ENCODE measurements at regions of chr4 and their contacts with region 1.

Region 1: DNA sequence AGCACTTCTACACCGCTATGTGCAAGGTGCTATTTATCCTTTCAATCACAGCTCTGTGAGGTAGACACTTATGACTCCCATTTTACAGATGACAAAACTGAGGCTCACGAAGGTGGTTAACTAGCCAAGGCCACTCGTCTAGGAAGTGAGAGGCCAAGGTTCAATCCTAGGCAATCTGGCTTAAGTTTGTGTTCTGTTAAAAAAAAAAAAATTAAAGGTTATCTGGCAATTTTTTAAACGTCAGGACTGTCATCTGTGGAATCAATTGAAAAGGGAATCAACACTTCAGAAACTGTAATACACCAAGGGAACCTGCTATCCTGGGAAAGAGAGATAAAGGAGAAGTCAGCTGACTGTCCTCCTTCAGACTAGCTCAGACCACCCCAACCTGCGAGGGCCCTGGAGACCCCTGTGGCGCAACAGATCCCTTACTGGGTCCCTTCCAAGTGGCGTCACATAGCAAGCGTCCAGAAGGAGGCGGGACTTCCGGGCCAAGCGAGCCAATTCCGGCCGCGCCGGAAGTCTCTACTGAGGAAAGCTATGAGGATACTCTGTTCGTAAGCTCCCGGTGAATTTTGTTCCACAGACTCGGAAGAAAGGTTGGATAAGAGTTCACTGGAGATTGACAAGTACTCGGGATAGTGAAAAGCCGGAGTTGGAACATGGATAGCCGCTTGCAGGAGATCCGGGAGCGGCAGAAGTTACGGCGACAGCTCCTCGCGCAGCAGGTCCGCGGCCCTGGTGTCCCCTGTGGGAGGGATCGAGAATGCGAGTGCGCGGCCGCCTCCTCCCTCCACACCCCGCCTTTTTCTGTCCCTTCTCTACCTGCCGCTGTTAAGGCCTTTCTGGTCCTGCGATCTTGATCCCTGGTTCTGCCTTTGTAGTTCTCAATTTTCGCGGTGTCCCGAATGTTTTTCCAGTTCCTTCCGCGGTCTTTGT is at the start of gene METTL14:
- DNase-seq: peak; percentile 66 to 89 (median 80)
- ATAC-seq: peak; percentile 95 to 97 (median 96)
- H3K4me3 ChIP-seq: peak within 1 kb of the TSS; percentile 92 to 98
- H3K4me3 Mint-ChIP-seq: peak within 1 kb of the TSS; percentile 96 to 98 (median 98)
- H3K27ac ChIP-seq: peak within 1 kb of the TSS; percentile 87
- H3K27ac Mint-ChIP-seq: peak within 1 kb of the TSS; percentile 93 to 98
- H3K4me1 ChIP-seq: peaks cover 3 to 19% of the 10 kb centered on the region in 2 experiments
- H3K4me1 Mint-ChIP-seq: peaks cover 32 to 37% (median 35%) of the 10 kb centered on the region in 3 donors
- H3K27me3 ChIP-seq: no peaks in the 10 kb centered on the region
- H3K27me3 Mint-ChIP-seq: peaks cover 0 to 1% of the 10 kb centered on the region in 2 donors
- total RNA-seq, gene METTL14: 39.4 to 53.8 (median 48.9) TPM

Region 2: GRCh38 chr4:118284169-118284568 is 401.0 kb before region 1 on chr4:
- CTCF ChIA-PET with region 1: interaction called in 1 of 2 experiments, 3 read pairs
- POLR2A ChIA-PET with region 1: interaction called, 5 to 14 read pairs
- DNase-seq: no peak
- ATAC-seq: no peak
- H3K4me3 ChIP-seq: no peak overlapping the region
- H3K4me3 Mint-ChIP-seq: no peak overlapping the region
- H3K27ac ChIP-seq: no peak overlapping the region
- H3K27ac Mint-ChIP-seq: no peak overlapping the region
- H3K4me1 ChIP-seq: peaks cover 6 to 23% of the 10 kb centered on the region in 2 experiments
- H3K4me1 Mint-ChIP-seq: peaks cover 41 to 45% (median 45%) of the 10 kb centered on the region in 3 donors
- H3K27me3 ChIP-seq: no peaks in the 10 kb centered on the region
- H3K27me3 Mint-ChIP-seq: no peaks in the 10 kb centered on the region

Region 3: GRCh38 chr4:118322831-118323502 is 362.2 kb before region 1 on chr4:
- CTCF ChIA-PET with region 1: no interaction called
- POLR2A ChIA-PET with region 1: no interaction called
- DNase-seq: no peak
- ATAC-seq: no peak
- H3K4me3 ChIP-seq: no peak overlapping the region
- H3K4me3 Mint-ChIP-seq: no peak overlapping the region
- H3K27ac ChIP-seq: no peak overlapping the region
- H3K27ac Mint-ChIP-seq: no peak overlapping the region
- H3K4me1 ChIP-seq: no peaks in the 10 kb centered on the region
- H3K4me1 Mint-ChIP-seq: no peaks in the 10 kb centered on the region
- H3K27me3 ChIP-seq: peaks cover 0 to 8% of the 10 kb centered on the region in 2 experiments
- H3K27me3 Mint-ChIP-seq: peaks cover 17 to 22% of the 10 kb centered on the region in 2 donors

Region 4: DNA sequence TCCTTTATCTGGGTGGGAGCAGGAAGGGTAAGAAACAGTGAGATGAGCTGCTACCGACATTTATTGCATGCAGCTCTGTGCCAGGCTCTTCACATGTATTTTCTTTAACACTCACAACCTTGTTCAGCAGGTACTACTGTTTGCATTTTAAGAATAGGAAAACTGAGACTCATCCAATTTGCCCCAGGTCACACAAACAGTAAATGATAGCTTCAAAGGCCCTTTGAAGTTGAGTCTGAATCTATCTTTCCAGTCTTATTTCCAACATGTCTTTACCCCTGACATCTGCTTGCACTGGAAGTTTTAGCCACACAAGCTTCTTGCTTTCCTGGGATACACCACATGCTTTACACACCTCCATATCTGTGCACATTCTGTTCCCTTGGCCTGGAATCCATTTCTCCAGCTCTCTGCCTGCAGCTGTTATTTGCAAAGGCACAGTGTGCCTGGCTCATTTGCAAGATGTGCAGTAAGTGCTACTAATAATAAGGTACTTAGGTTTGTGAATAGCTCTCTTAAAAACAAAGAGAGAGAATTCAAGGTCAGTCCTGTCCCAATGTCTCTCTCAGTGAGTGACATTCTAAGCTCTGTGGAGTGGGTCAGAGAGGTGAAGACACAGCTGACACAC is 61.3 kb after region 1 on chr4:
- CTCF ChIA-PET with region 1: no interaction called
- POLR2A ChIA-PET with region 1: interaction called in 1 of 2 experiments, 11 read pairs
- DNase-seq: no peak
- ATAC-seq: no peak
- H3K4me3 ChIP-seq: no peak overlapping the region
- H3K4me3 Mint-ChIP-seq: no peak overlapping the region
- H3K27ac ChIP-seq: no peak overlapping the region
- H3K27ac Mint-ChIP-seq: no peak overlapping the region
- H3K4me1 ChIP-seq: no peaks in the 10 kb centered on the region
- H3K4me1 Mint-ChIP-seq: no peaks in the 10 kb centered on the region
- H3K27me3 ChIP-seq: no peaks in the 10 kb centered on the region
- H3K27me3 Mint-ChIP-seq: no peaks in the 10 kb centered on the region

Region 5: DNA sequence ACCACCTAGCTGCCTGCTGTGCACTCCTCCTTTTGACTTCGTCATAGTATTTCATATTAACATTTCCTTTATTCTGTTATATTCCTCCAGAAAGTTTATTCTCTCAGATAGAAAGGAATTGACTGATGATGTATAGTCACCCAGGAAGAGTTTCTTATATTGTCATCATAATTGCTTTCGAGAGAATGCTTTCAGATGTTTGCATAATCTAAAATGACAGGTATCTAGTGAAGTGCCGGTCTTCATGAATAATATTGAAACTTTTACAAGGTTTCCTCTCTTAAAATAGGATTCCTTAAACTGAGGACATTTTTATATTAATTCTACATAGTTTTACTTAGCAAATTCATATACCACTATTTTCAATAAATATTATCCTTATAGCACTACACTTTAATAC is 140.7 kb after region 1 on chr4:
- CTCF ChIA-PET with region 1: no interaction called
- POLR2A ChIA-PET with region 1: no interaction called
- DNase-seq: no peak
- ATAC-seq: no peak
- H3K4me3 ChIP-seq: no peak overlapping the region
- H3K4me3 Mint-ChIP-seq: no peak overlapping the region
- H3K27ac ChIP-seq: no peak overlapping the region
- H3K27ac Mint-ChIP-seq: no peak overlapping the region
- H3K4me1 ChIP-seq: peaks cover 0 to 2% of the 10 kb centered on the region in 2 experiments
- H3K4me1 Mint-ChIP-seq: peaks cover 29 to 45% (median 35%) of the 10 kb centered on the region in 3 donors
- H3K27me3 ChIP-seq: no peaks in the 10 kb centered on the region
- H3K27me3 Mint-ChIP-seq: no peaks in the 10 kb centered on the region

Region 6: DNA sequence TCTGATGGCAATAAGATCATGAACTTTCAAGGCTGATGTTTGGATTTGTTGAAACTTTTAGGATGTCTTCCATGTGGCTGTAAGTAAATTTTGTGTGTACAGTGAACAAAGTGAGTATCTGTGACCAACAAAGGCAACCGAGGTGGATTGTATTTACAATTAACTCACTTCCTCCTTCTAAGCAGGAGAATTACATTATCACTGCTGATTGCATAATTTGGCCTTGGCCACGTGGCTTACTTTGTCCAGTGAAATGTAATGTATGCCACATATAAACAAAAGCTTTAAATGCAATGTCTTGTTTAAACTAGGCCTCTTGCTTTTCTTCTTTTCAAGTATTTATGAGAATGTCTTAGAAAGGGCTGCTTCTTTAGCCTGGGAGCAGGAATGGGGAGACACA is 1447.8 kb after region 1 on chr4:
- CTCF ChIA-PET with region 1: no interaction called
- POLR2A ChIA-PET with region 1: no interaction called
- DNase-seq: no peak
- ATAC-seq: no peak
- H3K4me3 ChIP-seq: no peak overlapping the region
- H3K4me3 Mint-ChIP-seq: no peak overlapping the region
- H3K27ac ChIP-seq: no peak overlapping the region
- H3K27ac Mint-ChIP-seq: no peak overlapping the region
- H3K4me1 ChIP-seq: no peaks in the 10 kb centered on the region
- H3K4me1 Mint-ChIP-seq: no peaks in the 10 kb centered on the region
- H3K27me3 ChIP-seq: no peaks in the 10 kb centered on the region
- H3K27me3 Mint-ChIP-seq: peaks cover 3 to 4% of the 10 kb centered on the region in 2 donors